K562 (cell line): ENCODE measurements at regions of chr1 and their contacts with region 1.

Region 1: DNA sequence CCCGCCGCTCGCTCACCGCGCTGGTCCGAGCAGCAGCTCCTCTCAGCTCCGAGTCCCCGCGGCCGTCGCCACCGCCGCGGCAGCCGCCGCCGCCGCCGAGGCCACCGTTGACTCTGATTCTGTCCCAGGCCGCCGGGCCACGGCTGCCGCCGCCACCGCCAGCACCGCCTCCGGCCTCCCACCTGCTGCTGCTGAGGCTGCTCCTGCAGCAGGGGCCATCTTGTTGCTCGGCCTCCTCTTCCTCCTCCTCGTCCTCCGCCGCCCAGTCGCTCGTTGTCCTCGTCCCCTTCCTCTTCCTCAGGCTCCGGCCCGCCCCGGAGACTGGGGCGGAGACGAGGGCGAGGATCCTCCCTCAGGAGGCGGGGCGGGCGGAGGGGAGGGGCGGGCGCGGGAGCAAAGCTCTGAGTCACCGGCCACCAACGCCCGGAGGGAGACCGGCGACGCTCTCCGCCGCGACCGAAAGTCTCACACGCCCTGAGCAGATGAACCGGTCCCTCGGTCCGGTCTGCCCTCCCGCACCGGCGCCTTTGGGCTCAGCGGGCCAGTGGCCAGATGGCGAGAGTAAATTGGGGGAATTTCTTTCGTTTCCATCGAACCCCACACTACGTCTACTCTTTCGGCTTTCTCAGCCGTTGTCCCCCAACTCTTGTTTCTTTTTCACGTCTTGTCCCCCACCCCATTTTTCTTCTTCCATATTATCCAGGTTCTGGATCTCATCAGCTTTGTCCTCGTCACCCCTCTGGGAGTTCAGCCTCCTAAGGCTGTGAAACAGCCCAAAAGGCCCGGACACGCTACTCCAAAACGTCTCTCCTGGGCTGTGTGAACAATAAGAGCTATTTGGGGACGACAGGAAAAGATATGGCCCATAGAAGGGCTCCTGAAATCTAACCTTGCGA is at the start of gene RC3H1:
- DNase-seq: peak; percentile 95 to 96 (median 96)
- ATAC-seq: peak; percentile 89
- H3K4me3 ChIP-seq: peak within 1 kb of the TSS; percentile 88
- H3K27ac ChIP-seq: peak within 1 kb of the TSS; percentile 88
- H3K4me1 ChIP-seq: peaks cover 12 to 19% of the 10 kb centered on the region in 2 experiments; a peak in 3 of 5 replicates
- H3K27me3 ChIP-seq: no peaks in the 10 kb centered on the region
- CTCF ChIP-seq: no peak
- EP300 ChIP-seq: 0 out of 2 replicates have a peak, but pooled peaks have one; percentile 24
- POLR2A ChIP-seq: peak; percentile 98
- RAD21 ChIP-seq: no peak
- polyA plus RNA-seq, gene RC3H1: 2.4 to 3.4 TPM

Region 2: GRCh38 chr1:173669491-173669941 is 352.8 kb before region 1 on chr1 and contains the start of gene ANKRD45:
- CTCF ChIA-PET with region 1: no interaction called
- POLR2A ChIA-PET with region 1: no interaction called
- in situ Hi-C with region 1: no loop called
- intact Hi-C with region 1: no loop called
- DNase-seq: no peak
- ATAC-seq: no peak
- H3K4me3 ChIP-seq: no peak within 1 kb of the TSS
- H3K27ac ChIP-seq: peak within 1 kb of the TSS; percentile 76
- H3K4me1 ChIP-seq: peaks cover 16 to 19% of the 10 kb centered on the region in 2 experiments
- H3K27me3 ChIP-seq: no peaks in the 10 kb centered on the region
- CTCF ChIP-seq: no peak
- EP300 ChIP-seq: no peak
- POLR2A ChIP-seq: no peak
- RAD21 ChIP-seq: no peak
- polyA plus RNA-seq, gene ANKRD45: 0.10 to 0.29 TPM

Region 3: GRCh38 chr1:173963477-173963876 is 58.9 kb before region 1 on chr1:
- CTCF ChIA-PET with region 1: no interaction called
- POLR2A ChIA-PET with region 1: interaction called, 3 read pairs
- in situ Hi-C with region 1: no loop called
- intact Hi-C with region 1: loop called (anchors 2 kb)
- DNase-seq: no peak
- ATAC-seq: no peak
- H3K4me3 ChIP-seq: no peak overlapping the region
- H3K27ac ChIP-seq: no peak overlapping the region
- H3K4me1 ChIP-seq: no peaks in the 10 kb centered on the region
- H3K27me3 ChIP-seq: no peaks in the 10 kb centered on the region
- CTCF ChIP-seq: no peak
- EP300 ChIP-seq: no peak
- POLR2A ChIP-seq: no peak
- RAD21 ChIP-seq: no peak

Region 4: DNA sequence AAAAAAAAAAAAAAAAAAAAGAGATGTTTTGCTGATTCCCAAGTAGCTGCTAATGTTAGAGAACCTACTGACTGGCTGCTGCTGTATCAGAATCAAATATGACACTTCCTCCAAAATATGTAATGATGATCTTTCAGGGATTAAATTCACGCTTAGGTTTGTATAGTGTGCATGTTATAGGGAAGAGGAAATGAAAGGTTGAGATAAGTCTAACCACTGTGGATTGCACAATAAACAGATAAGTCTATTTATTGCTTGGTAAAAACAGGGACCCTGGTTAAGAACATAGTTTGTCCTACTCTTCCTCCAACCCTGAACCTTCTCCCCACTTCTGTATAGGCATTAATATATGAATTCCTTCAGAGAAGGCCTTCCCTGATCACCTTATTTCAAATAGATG is 13.3 kb before region 1 on chr1:
- CTCF ChIA-PET with region 1: no interaction called
- POLR2A ChIA-PET with region 1: interaction called, 19 read pairs
- in situ Hi-C with region 1: no loop called
- intact Hi-C with region 1: no loop called
- DNase-seq: no peak
- ATAC-seq: peak; percentile 55
- H3K4me3 ChIP-seq: no peak overlapping the region
- H3K27ac ChIP-seq: 0 out of 3 replicates have a peak overlapping the region, but pooled peaks have one; percentile 6
- H3K4me1 ChIP-seq: peaks cover 0 to 3% of the 10 kb centered on the region in 2 experiments; a peak in 3 of 5 replicates
- H3K27me3 ChIP-seq: no peaks in the 10 kb centered on the region
- CTCF ChIP-seq: no peak
- EP300 ChIP-seq: no peak
- POLR2A ChIP-seq: no peak
- RAD21 ChIP-seq: no peak

Region 5: DNA sequence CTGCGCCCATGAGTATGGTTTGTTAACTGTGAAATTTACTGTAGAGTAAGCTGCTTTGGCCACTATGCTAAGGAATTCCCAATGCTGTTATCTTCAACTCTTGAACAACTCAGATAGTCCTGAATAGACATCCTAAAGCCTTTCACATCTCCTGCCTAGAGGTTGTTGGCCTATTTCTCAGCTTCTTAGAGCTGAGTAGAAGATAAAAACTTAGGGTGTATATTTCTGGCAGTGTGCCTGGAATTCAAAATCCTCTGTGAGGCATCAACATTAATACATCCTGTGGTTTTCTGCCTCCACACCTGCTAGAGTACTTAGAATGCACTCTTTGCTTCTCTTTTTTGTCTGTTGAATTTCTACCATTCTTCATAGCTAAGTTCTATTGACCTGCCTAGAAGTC is 45.7 kb after region 1 on chr1:
- CTCF ChIA-PET with region 1: no interaction called
- POLR2A ChIA-PET with region 1: interaction called, 3 read pairs
- in situ Hi-C with region 1: no loop called
- intact Hi-C with region 1: loop called (anchors 5 kb)
- DNase-seq: peak in 1 of 4 experiments; percentile 59
- ATAC-seq: peak; percentile 71
- H3K4me3 ChIP-seq: no peak overlapping the region
- H3K27ac ChIP-seq: no peak overlapping the region
- H3K4me1 ChIP-seq: peaks cover 0 to 10% of the 10 kb centered on the region in 2 experiments; a peak in 1 of 5 replicates
- H3K27me3 ChIP-seq: no peaks in the 10 kb centered on the region
- CTCF ChIP-seq: no peak
- EP300 ChIP-seq: no peak
- POLR2A ChIP-seq: no peak
- RAD21 ChIP-seq: no peak